ENCODE measurements at regions of chr11 and their contacts with region 1.

Region 1: GRCh38 chr11:33687733-33688479 is 12.7 kb downstream of the C11orf91 start:
- DNase-seq: no peak
- H3K4me3 ChIP-seq: no peak overlapping the region
- CTCF ChIP-seq: peak; percentile 63

Region 2: GRCh38 chr11:33362051-33362910 is 325.6 kb before region 1 on chr11:
- CTCF ChIA-PET with region 1: interaction called, 396 read pairs
- POLR2A ChIA-PET with region 1: no interaction called
- DNase-seq: no peak
- H3K4me3 ChIP-seq: no peak overlapping the region
- CTCF ChIP-seq: no peak

Region 3: GRCh38 chr11:33542921-33543320 is 145.0 kb before region 1 on chr11:
- CTCF ChIA-PET with region 1: interaction called, 74 read pairs
- POLR2A ChIA-PET with region 1: no interaction called
- DNase-seq: no peak
- H3K4me3 ChIP-seq: no peak overlapping the region
- CTCF ChIP-seq: peak; percentile 68

Region 4: DNA sequence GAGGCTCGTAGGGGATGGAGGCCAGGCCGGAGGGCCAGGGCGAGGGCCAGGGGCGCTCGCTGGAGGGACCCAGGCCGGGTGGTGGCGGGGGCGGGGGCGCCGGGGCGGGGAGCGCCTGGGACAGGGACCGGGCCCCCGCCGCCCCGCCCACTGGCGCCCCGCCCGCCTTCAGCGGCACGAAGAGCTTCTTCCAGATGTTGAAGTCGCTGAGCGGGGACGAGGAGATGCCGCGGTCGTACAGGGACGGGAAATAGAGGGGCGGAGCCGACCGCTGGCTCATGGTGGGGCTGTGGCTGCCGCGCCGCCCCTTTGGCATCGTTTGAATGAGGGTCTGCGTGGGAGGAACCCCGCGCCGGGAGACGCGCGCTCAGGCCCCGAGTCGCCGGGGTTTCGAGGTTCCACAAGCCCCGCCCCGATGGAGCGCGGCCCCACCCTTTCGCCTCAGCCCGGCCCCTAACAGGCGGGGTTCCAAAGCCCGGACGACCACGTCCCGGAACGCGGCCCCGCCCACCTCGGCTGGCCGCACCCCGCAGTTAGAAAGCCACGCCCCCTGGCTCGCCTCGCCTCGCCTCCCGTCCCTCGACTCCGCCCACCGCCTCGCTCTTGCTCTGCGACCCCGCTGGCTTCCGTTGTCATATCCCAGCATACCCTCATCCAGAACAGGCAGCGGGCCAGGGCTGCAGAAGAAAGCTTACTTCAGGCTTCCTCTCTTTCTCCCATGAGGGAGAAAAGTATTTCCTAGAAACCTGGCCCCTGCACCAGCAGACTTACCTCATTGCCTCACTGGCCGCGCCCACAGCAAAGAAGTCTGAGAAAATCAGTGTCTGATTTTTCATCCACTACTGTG is 12.7 kb after region 1 on chr11 and contains the start of gene C11orf91:
- CTCF ChIA-PET with region 1: interaction called, 19 read pairs
- POLR2A ChIA-PET with region 1: interaction called, 31 read pairs
- DNase-seq: peak; percentile 64
- H3K4me3 ChIP-seq: peak within 1 kb of the TSS; percentile 67
- CTCF ChIP-seq: no peak

Region 5: DNA sequence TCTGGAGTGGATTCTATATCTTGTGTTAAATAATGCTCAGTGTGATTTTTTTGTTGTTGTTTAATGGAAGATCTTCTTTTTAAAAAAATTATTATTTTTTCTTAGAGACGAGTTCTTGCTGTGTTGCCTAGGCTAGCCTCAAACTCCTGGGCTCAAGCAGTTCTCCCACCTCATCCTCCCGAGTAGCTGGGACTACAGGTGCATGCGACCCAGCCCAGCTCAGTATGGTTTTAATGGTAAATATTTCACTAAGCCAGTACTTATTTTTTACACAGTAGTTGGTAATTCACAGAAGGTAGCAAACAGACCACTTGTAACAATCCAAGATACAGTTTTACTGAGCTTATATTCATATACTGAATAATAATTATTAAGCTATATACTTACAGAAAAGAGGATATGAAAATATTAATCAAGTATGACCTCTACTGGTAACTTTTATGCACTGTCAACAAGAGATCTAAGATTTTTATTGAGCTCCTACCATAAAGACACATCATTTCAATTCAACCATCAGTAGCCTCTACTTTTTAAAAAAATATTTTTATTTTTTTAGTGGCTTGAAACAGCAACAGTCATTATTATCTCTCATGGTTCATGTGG is 54.4 kb after region 1 on chr11:
- CTCF ChIA-PET with region 1: interaction called, 110 read pairs
- POLR2A ChIA-PET with region 1: interaction called, 4 read pairs
- DNase-seq: no peak
- H3K4me3 ChIP-seq: no peak overlapping the region
- CTCF ChIP-seq: peak; percentile 14

Region 6: GRCh38 chr11:34274723-34275401 is 587.0 kb after region 1 on chr11:
- CTCF ChIA-PET with region 1: no interaction called
- POLR2A ChIA-PET with region 1: no interaction called
- DNase-seq: peak; percentile 45
- H3K4me3 ChIP-seq: no peak overlapping the region
- CTCF ChIP-seq: no peak